Lower leg skin (tissue), 4 donors: ENCODE measurements at regions of chr12 and their contacts with region 1.

Region 1: DNA sequence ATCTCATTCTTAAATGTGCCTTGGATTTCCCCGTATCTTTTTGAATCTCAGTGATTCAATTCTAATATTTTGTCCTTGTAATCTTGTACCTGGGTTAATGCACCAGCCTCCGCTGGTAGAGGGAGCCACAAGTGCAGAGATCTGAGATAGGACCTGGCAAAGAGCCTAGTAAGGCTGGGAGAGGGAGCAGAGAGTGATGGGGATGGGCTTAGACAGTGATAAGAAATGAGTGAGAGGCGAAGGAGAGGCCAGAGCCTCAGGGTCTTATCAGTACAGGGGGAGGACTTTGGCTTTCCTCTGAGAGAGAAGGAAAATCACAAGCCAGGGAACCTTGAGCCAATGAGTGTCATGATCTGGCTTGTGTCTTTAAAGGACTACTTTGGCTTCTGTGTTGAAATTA is 30.5 kb upstream of the LMNTD1 start:
- DNase-seq: no peak
- H3K4me3 ChIP-seq: no peak overlapping the region
- CTCF ChIP-seq: no peak
- POLR2A ChIP-seq: no peak

Region 2: GRCh38 chr12:24307716-24308335 is 1275.7 kb before region 1 on chr12:
- intact Hi-C with region 1: no loop called
- DNase-seq: no peak
- H3K4me3 ChIP-seq: no peak overlapping the region
- CTCF ChIP-seq: no peak
- POLR2A ChIP-seq: no peak

Region 3: DNA sequence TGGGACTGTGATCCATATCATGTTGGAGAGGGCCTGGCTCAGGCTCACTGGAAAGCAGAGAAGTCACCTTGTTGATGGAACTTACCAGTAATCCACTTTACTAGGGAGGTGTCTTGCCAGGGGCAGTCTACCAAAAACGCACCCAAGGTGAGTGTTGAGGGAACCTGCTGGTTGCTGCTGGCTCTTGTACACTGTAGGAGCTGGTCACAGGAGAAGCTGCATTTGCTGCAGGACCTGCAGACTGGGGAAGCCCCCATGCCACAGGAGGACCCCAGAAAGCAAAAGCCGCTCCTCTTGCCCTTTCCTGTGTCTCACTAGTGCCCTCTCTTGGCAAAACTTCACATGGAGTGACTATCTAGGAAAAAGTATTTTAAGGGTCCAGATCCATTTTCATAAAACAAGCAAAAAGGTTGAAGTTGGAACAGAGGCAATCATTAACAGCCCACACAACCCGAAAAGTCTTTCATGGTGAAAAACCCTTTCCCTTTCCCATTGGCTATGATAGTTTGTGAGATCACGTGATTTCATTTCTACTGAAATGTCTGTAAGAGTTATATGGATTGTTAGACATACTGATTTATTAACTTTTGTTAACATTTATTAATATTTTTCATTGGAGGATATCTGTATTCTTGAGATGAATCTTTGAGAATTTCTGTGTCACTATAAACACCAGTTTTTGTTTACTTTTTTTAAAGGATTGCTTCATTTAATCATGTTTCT is 434.1 kb after region 1 on chr12:
- intact Hi-C with region 1: loop called (anchors 10 kb)
- DNase-seq: no peak
- H3K4me3 ChIP-seq: no peak overlapping the region
- CTCF ChIP-seq: no peak
- POLR2A ChIP-seq: no peak